K562 (cell line): ENCODE measurements at regions of chr11 and their contacts with region 1.

Region 1: DNA sequence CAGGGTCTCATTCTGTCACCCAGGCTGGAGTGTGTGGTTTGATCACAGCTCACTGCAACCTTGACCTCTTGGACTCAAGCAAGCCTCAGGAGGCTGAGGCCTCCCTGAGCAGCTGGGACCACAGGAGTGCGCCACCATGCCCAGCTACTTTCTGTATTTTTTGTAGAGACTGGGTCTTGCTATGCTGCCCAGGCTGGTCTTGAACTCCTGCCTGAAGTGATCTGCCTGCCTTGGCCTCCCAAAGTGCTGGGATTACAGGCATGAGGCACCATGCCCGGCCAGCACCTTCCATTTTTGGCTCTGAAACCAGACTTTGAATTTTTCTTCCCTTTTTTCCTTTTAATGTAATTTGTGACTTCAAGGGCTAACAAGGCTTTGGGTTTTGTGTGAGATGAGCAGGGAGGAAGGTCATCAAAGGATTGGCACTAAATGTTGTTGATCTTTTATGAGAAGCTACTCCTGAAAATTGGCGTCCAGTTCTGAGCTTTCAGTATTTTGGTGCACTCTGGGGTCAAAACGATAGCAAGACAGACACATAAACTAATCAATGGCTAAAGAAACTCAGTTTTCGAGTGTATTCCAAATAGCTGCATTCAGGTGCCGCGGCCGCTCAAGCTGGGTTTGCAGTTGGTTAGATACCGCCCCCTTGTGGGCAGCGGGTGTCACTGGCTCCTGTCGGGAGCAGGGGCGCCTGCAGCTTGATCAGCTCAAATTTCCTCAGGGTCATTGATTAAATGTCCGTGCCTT is 51.9 kb upstream of the CLMP start:
- DNase-seq: peak; percentile 73 to 81 (median 80)
- ATAC-seq: peak; percentile 98
- H3K4me3 ChIP-seq: no peak overlapping the region
- H3K27ac ChIP-seq: no peak overlapping the region
- H3K4me1 ChIP-seq: no peaks in the 10 kb centered on the region
- H3K27me3 ChIP-seq: peaks cover 0 to 30% of the 10 kb centered on the region in 2 experiments; a peak in 3 of 5 replicates
- CTCF ChIP-seq: peak; percentile 87 to 95 (median 89)
- EP300 ChIP-seq: no peak
- POLR2A ChIP-seq: no peak
- RAD21 ChIP-seq: peak; percentile 71 to 78

Region 2: DNA sequence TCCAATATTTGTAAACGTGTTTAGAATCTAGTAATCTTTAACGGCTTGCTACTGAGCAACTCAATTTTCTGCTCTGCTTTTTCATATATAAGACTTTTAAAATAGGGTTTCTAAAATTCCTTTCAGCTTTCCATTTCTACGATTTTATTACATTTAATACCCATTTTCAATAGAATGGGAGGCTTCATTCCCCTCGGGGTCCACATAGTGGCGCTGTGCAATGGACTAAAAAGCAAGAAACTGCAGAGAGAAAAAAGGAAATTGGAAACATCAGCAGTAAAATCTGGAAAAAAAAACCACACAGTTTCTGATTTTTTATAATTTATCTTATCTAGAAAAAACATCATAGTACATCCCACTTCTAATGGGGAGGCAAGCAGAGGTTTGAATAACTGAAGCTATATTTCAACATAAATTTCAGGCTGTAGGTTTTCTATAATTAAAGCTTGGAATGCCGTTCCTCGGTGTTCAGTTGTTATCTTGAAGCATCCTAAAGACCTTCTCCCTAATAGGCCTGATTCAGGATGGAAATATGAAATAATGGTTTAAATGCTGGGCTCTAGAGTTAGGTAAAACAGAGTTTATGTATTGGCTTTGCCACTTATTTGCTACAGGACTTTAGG is 383.1 kb before region 1 on chr11:
- CTCF ChIA-PET with region 1: interaction called, 3 read pairs
- POLR2A ChIA-PET with region 1: no interaction called
- in situ Hi-C with region 1: no loop called
- intact Hi-C with region 1: loop called (anchors 5 kb)
- DNase-seq: peak; percentile 30 to 42 (median 36)
- ATAC-seq: peak; percentile 67; the same call in 2 of the 3 replicates
- H3K4me3 ChIP-seq: no peak overlapping the region
- H3K27ac ChIP-seq: no peak overlapping the region
- H3K4me1 ChIP-seq: no peaks in the 10 kb centered on the region
- H3K27me3 ChIP-seq: no peaks in the 10 kb centered on the region; a peak in 1 of 5 replicates
- CTCF ChIP-seq: peak; percentile 59 to 77 (median 62); a peak in 5 of 6 replicates
- EP300 ChIP-seq: no peak
- POLR2A ChIP-seq: no peak
- RAD21 ChIP-seq: peak; percentile 58 to 60

Region 3: DNA sequence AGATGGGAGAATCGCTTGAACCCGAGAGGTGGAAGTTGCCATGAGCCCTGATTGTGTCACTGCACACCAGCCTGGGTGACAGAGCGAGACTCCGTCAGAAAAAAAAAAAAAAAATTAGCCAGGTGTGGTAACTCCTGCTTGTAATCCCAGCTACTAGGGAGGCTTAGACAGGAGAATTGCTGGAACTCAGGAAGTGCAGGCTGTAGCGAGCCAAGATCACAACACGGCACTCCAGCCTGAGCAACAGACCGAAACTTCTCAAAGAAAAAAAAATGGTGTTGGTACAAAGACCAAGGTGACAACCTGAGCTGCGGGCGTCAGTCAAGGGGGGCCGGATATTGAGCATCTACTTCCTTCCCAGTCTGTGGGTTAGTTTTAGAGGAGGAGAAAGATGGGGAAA is 136.6 kb before region 1 on chr11:
- CTCF ChIA-PET with region 1: interaction called, 13 read pairs
- POLR2A ChIA-PET with region 1: interaction called, 4 read pairs
- in situ Hi-C with region 1: loop called (anchors 5 kb)
- intact Hi-C with region 1: loop called (anchors 1 kb)
- DNase-seq: no peak
- ATAC-seq: no peak
- H3K4me3 ChIP-seq: no peak overlapping the region
- H3K27ac ChIP-seq: no peak overlapping the region
- H3K4me1 ChIP-seq: no peaks in the 10 kb centered on the region; a peak in 1 of 5 replicates
- H3K27me3 ChIP-seq: peaks cover 21 to 34% of the 10 kb centered on the region in 2 experiments; a peak in 3 of 5 replicates
- CTCF ChIP-seq: no peak
- EP300 ChIP-seq: no peak
- POLR2A ChIP-seq: no peak
- RAD21 ChIP-seq: no peak

Region 4: GRCh38 chr11:123116486-123116885 is 130.4 kb before region 1 on chr11:
- CTCF ChIA-PET with region 1: interaction called, 13 read pairs
- POLR2A ChIA-PET with region 1: interaction called, 4 read pairs
- in situ Hi-C with region 1: loop called (anchors 5 kb)
- intact Hi-C with region 1: loop called (anchors 1 kb)
- DNase-seq: no peak
- ATAC-seq: no peak
- H3K4me3 ChIP-seq: no peak overlapping the region
- H3K27ac ChIP-seq: no peak overlapping the region
- H3K4me1 ChIP-seq: no peaks in the 10 kb centered on the region
- H3K27me3 ChIP-seq: peaks cover under 1 to 3% of the 10 kb centered on the region in 2 experiments; a peak in 1 of 5 replicates
- CTCF ChIP-seq: no peak
- EP300 ChIP-seq: no peak
- POLR2A ChIP-seq: no peak
- RAD21 ChIP-seq: no peak

Region 5: DNA sequence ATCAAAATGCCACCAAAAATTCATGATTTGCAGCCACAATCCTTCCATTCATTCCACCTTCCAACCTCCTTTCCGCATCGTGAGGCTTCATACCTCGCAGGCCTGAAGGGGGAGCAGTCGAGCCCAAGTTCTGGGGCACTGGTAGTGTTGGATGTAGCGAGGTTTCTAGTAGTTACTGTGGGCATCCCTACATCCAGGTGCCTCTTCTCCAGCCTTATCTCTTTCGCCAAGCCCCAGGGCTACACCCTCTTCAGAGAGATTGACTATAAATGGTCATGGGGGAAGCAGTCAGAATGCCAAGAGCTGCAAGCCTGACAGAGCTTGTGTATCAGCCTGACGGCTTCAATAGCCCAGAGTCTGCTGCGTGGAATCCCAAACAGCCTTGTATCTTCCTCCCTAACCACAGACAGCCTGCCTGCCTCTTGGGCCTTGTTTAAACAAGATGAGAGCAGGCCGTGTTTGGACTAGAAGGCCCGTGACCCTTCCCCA is 80.8 kb before region 1 on chr11:
- CTCF ChIA-PET with region 1: no interaction called
- POLR2A ChIA-PET with region 1: no interaction called
- in situ Hi-C with region 1: no loop called
- intact Hi-C with region 1: loop called (anchors 5 kb)
- DNase-seq: peak in 3 of 4 experiments; percentile 8 to 18 (median 16)
- ATAC-seq: peak; percentile 72
- H3K4me3 ChIP-seq: no peak overlapping the region
- H3K27ac ChIP-seq: no peak overlapping the region
- H3K4me1 ChIP-seq: no peaks in the 10 kb centered on the region
- H3K27me3 ChIP-seq: peaks cover 7 to 19% of the 10 kb centered on the region in 2 experiments; a peak in 2 of 5 replicates
- CTCF ChIP-seq: peak; percentile 45 to 64 (median 46)
- EP300 ChIP-seq: no peak
- POLR2A ChIP-seq: no peak
- RAD21 ChIP-seq: no peak